ENCODE measurements at regions of chr10 and their contacts with region 1.

Region 1: GRCh38 chr10:67884313-67884841 is at the start of gene SIRT1:
- DNase-seq: peak; percentile 96
- H3K4me3 ChIP-seq: peak within 1 kb of the TSS; percentile 78
- H3K27ac ChIP-seq: peak within 1 kb of the TSS; percentile 75
- H3K4me1 ChIP-seq: peaks cover 17% of the 10 kb centered on the region
- CTCF ChIP-seq: peak; percentile 18; the same call in 1 of the 2 replicates
- total RNA-seq, gene SIRT1: 18.0 and 20.4 TPM in 2 replicates

Region 2: DNA sequence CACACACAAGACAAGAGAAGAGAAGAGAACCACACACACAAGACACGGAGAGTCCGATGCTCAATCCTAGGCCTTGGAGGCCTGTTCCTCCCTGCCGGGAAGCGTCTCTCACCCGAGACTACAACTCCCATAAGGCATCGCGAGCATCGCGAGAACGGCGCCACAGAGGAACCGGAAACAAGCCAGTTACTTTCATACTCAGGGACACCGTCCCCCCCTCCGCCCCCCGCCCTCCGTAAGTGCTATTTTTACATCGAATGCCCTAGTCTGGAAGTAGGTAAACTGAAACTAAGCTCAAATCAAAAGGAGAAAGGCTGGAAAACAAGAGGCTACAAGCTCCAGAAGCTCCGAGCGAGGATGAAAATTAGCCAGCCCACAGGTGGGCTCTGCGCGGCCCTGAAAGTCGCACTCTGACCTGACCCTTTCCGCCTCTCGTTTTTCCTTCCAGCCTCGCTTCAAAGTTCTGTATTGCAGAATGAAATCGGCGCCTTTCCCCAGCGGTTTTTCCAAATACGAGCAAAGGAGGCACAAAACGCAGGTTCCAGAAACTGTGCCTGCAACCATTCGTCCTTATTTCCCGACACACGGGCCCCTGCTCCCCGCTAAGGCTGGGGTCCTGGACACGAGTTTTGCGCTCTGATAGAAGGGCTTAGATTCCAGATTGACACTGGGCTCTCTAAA is 34.9 kb before region 1 on chr10:
- CTCF ChIA-PET with region 1: no interaction called
- POLR2A ChIA-PET with region 1: interaction called, 6 read pairs
- intact Hi-C with region 1: loop called (anchors 2 kb)
- DNase-seq: peak; percentile 92
- H3K4me3 ChIP-seq: peak overlapping the region; percentile 92
- H3K27ac ChIP-seq: peak overlapping the region; percentile 52
- H3K4me1 ChIP-seq: peaks cover 4% of the 10 kb centered on the region
- CTCF ChIP-seq: no peak

Region 3: DNA sequence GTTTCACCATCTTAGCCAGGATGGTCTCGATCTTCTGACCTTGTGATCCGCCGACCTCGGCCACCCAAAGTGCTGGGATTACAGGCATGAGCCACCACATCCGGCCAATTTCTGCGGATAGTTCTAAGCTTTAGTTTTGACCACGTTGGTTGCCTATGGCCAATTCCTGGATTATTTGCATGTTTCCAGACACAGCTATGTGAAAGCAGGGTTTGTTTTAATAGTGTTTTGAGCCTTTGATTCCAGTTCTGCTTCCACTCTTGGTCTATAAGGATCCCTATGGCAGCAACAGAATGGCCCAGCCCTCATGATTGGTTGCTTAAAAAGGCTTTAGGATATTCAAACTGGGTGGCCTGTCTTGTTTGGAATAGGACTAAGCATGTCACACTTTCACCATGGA is 19.2 kb after region 1 on chr10:
- CTCF ChIA-PET with region 1: no interaction called
- POLR2A ChIA-PET with region 1: interaction called, 16 read pairs
- intact Hi-C with region 1: no loop called
- DNase-seq: no peak
- H3K4me3 ChIP-seq: no peak overlapping the region
- H3K27ac ChIP-seq: no peak overlapping the region
- H3K4me1 ChIP-seq: no peaks in the 10 kb centered on the region
- CTCF ChIP-seq: no peak

Region 4: GRCh38 chr10:68074775-68075549 is 190.6 kb after region 1 on chr10 and contains the start of gene HERC4:
- CTCF ChIA-PET with region 1: no interaction called
- POLR2A ChIA-PET with region 1: interaction called, 7 read pairs
- intact Hi-C with region 1: loop called (anchors 1 kb)
- DNase-seq: peak; percentile 91
- H3K4me3 ChIP-seq: peak within 1 kb of the TSS; percentile 85
- H3K27ac ChIP-seq: peak within 1 kb of the TSS; percentile 83
- H3K4me1 ChIP-seq: peaks cover 15% of the 10 kb centered on the region
- CTCF ChIP-seq: no peak
- total RNA-seq, gene HERC4: 34.2 and 36.1 TPM in 2 replicates

Region 5: DNA sequence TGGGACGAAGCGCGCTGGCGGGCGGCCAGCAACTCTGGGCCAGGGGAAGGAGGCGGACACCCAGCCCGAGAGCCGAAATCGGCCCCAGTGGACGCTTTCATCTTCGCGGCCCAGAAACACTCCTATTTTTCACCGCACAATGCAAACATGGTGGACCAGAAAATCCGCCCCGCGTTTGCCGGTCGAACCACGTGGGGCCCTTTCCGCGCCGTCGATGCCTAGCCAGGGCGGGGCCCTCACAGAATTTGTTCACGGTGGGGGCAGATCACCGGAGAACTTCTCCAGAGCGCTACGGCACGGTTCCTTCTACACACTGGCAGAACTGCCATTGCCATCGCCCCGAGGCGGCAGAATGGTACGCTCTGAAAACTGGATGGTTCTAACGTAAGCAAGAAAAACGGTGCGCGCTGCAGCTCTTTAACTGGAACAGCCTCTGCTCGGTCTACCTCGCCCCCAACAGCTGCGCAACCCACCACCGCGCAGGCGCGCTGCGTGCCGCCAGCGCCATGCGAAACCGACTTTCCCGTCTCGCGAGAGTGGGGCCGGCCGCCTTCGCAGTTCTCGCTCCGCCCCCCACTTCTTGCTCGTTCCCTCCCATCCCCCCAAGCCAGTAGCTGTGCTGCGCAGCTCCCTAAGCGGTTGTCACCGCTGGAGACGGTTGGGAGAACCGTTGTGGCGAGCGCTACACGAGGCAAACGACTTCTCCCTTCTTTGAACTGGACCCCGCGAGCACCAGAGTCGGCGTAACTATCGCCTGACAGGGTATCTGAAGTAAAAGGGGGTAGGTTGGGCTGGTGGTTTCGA is 447.3 kb after region 1 on chr10 and contains the start of gene HNRNPH3:
- CTCF ChIA-PET with region 1: no interaction called
- POLR2A ChIA-PET with region 1: interaction called, 11 read pairs
- intact Hi-C with region 1: loop called (anchors 1 kb)
- DNase-seq: peak; percentile 99
- H3K4me3 ChIP-seq: peak within 1 kb of the TSS; percentile 85
- H3K27ac ChIP-seq: peak within 1 kb of the TSS; percentile 89
- H3K4me1 ChIP-seq: peaks cover 65% of the 10 kb centered on the region
- CTCF ChIP-seq: no peak
- total RNA-seq, gene HNRNPH3: 30.8 and 69.2 TPM in 2 replicates